Posterior vena cava (tissue), 2 donors: ENCODE measurements at regions of chr10 and their contacts with region 1.

Region 1: DNA sequence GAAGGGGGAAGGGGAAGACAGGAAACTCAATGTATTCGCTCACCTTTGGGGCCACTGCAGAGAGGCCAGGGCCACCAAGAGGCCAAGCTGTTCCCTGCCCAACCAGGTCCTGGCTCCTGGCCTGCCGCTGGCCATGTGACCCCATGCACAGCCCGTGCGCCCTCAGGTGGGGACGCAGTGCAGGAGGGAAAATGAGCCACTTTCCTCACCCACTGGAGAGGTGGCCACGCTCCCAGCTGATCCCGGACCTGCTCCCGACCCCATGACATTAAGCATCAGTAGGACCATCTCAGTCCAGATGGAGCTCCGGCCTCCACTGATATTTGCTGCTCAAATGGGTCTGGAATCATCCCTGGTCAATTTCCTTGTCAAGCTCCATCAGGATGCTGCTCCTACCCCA is 40.2 kb downstream of the HSPA12A start:
- DNase-seq: peak; percentile 69

Region 2: DNA sequence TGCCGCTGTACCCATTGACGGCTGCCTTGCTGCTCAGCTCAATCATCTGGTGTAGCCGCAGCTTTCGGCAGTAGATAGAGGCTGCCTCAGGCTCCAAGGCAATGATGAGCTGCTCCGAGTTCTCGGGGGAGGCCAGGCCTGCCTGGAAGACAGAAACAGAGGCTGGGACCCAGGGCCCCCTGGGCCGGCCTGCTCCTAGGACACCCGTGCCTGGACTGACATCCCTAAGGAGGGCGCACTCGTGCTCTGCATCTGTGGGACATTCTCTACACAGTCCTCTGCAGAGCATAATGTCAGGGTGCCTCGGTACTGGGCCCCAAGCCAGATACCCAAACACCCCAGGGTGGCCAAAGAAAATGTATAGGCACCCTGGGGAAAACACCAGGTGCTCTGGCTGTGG is 18.3 kb before region 1 on chr10:
- intact Hi-C with region 1: loop called in 1 of 2 experiments (anchors 1 kb)
- DNase-seq: peak; percentile 53